IMR-90 (cell line): ENCODE measurements at regions of chr13 and their contacts with region 1.

Region 1: DNA sequence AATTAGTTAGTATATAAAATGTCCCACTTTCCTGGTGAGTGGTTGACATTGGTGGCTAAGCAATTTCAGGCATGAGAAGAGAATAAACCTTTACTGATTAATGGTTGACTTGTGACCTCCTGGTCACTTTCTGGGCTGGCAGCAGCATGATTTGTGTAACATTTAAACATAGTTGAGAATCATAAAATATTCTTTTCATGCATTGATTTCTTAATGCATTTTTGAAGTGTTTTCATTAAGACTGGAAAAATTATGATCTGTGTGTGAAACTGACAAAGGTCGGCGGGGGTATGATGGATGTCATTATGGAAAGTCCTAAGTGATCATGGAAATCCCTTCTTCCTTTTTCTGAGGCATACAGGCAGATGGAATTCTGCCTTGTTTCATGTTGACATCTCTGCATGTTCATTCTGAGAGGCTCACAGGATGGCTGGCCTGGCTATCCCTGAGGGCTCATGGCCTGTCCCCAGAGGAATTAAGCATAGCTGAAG is 98.7 kb upstream of the RNF113B start:
- DNase-seq: no peak
- ATAC-seq: peak; percentile 19; the same call in 1 of the 2 replicates
- H3K4me3 ChIP-seq: no peak overlapping the region
- H3K27ac ChIP-seq: peak overlapping the region; percentile 70; the same call in 1 of the 2 replicates
- H3K4me1 ChIP-seq: peaks cover 35% of the 10 kb centered on the region
- H3K27me3 ChIP-seq: no peaks in the 10 kb centered on the region
- CTCF ChIP-seq: no peak
- POLR2A ChIP-seq: no peak
- RAD21 ChIP-seq: no peak

Region 2: DNA sequence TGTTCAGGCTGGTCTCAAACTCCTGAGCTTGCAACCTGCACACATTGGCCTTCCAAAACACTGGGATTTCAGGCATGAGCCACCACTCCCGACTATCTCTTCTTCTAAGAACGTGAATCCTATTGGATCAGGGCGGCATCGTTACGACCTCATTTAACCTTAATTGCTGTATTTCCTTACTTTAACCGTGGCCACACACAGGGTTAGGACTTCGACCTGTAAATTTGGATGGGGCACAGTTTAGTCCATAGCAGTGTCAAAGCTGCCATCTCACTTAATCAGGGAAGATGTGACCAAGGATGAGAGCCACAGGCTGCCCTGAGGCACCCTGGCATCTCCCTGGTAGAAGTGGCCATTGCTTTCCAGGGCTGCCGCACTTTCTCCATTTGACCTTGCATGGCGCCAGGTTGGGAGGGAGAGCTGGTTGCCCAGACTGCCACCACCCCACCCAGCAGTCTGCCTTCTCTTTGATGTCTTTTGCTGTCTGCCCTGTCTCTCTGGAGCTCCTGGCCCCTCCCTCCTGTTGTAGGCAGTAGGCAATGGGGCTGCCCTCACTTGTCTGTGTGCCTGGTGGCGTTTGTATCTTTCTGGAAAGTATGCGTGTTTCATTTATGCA is 42.6 kb after region 1 on chr13:
- CTCF ChIA-PET with region 1: no interaction called
- POLR2A ChIA-PET with region 1: interaction called, 13 read pairs
- dilution Hi-C with region 1: no loop called
- in situ Hi-C with region 1: no loop called
- intact Hi-C with region 1: no loop called
- DNase-seq: no peak
- ATAC-seq: no peak
- H3K4me3 ChIP-seq: no peak overlapping the region
- H3K27ac ChIP-seq: no peak overlapping the region
- H3K4me1 ChIP-seq: peaks cover 8% of the 10 kb centered on the region
- H3K27me3 ChIP-seq: no peaks in the 10 kb centered on the region
- CTCF ChIP-seq: no peak
- POLR2A ChIP-seq: no peak
- RAD21 ChIP-seq: no peak

Region 3: DNA sequence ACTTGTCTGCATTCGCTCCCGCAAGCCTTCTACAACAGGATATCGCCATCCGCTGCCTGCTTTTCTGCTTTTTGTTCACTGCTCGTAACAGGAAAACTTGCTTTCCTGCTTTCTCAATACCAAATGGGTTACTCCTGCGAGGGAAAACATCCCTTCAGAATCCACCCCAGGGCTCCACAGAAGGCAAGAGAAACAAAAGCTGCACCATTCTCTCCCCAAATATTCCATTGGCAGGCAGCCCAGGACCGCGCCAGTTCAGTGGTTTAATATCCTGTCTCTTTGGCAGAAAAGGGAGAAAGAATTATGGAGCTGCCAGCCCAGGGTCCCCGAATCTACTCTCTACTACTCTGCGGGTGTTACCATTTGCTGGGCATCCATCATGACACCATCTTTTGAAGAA is 786.9 kb after region 1 on chr13:
- CTCF ChIA-PET with region 1: no interaction called
- POLR2A ChIA-PET with region 1: no interaction called
- dilution Hi-C with region 1: no loop called
- in situ Hi-C with region 1: no loop called
- intact Hi-C with region 1: no loop called
- DNase-seq: peak; percentile 30
- ATAC-seq: peak; percentile 24
- H3K4me3 ChIP-seq: no peak overlapping the region
- H3K27ac ChIP-seq: no peak overlapping the region
- H3K4me1 ChIP-seq: peaks cover 12% of the 10 kb centered on the region
- H3K27me3 ChIP-seq: no peaks in the 10 kb centered on the region
- CTCF ChIP-seq: no peak
- POLR2A ChIP-seq: no peak
- RAD21 ChIP-seq: no peak